ENCODE measurements at regions of chr10 and their contacts with region 1.

Region 1: DNA sequence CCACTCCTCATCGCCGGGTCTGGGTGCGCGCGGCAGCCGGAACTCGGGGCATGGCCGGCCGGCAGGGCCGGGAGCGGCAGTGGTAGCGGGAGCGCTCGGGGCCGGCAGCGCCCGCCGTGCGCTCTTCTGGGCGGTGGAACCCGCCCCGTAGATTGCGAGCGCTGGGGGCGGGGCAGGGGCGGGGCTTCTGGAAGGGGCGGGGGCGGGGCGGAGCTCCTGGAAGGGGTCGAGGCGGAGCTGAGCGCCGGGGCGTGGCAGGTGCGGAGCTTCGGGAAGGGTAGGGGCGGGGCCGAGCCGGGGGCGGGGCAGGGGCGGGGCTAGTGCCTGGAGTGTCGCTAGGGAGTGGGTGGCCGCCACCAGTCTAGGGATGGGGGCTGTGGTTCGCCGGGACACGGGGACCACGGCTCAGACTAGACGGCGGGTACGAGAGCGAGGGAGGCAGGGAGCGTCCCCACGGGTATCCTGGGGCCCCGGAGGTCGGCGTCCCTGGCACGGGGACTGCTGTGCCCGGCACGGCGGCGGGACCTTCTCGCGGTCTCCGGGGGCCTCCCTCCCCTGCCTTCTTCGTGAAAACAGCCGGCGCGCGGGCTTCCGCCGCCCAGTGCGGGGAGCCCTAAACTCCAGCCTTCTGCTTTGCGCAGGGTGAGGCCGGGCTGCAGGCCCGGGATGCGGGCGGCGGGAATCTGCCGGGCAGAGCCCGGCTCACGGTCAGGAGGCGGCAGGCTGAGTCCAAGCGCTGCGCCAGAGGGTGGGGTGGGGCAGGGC is at the start of gene STK32C:
- DNase-seq: peak; percentile 80
- H3K4me3 Mint-ChIP-seq: peak within 1 kb of the TSS; percentile 87
- H3K27ac Mint-ChIP-seq: peak within 1 kb of the TSS; percentile 89
- H3K4me1 Mint-ChIP-seq: no peaks in the 10 kb centered on the region
- H3K27me3 Mint-ChIP-seq: peaks cover 39% of the 10 kb centered on the region
- total RNA-seq, gene STK32C: 14.6 and 15.5 TPM in 2 replicates

Region 2: GRCh38 chr10:132158122-132158741 is 149.8 kb before region 1 on chr10:
- intact Hi-C with region 1: loop called (anchors 1 kb)
- DNase-seq: peak; percentile 40
- H3K4me3 Mint-ChIP-seq: no peak overlapping the region
- H3K27ac Mint-ChIP-seq: peak overlapping the region; percentile 83
- H3K4me1 Mint-ChIP-seq: peaks cover 28% of the 10 kb centered on the region
- H3K27me3 Mint-ChIP-seq: peaks cover 2% of the 10 kb centered on the region

Region 3: DNA sequence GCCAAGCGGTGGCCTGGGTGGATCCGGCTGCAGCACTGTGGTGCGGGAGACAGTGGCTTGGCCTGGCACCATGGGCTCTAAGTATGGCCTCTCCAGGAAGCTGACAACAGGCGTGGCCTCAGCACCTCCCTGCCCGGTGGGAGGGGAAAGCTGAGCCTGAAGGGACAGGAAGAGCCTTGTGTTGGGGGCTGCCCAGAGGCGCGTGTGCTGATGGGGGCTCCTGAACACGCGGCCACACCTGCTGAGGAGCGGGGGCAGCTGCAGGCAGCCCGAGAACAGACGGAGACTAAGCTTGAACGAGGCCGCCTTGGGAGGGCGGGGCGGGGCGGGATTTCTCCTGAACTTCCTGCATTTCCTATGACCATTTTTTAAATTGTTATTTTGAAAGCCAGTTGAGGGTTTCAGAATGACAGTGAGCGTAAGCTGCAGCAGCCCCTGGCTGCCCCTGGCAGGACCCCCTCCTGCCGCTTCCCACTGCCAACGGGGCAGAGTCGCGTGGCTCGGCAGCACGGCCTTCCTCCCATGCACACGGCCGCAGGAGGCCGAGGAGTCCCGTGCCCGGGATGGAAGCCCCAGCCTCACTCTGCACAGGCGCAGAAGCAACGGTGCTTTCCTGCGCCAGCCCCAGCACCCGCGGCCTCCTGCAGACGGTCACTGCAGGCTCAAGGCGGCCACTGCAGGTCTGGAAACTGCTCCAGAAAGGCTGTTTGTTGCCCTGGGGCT is 78.0 kb before region 1 on chr10:
- intact Hi-C with region 1: loop called (anchors 5 kb)
- DNase-seq: peak; percentile 47
- H3K4me3 Mint-ChIP-seq: peak overlapping the region; percentile 77
- H3K27ac Mint-ChIP-seq: peak overlapping the region; percentile 89
- H3K4me1 Mint-ChIP-seq: peaks cover 24% of the 10 kb centered on the region
- H3K27me3 Mint-ChIP-seq: no peaks in the 10 kb centered on the region

Region 4: DNA sequence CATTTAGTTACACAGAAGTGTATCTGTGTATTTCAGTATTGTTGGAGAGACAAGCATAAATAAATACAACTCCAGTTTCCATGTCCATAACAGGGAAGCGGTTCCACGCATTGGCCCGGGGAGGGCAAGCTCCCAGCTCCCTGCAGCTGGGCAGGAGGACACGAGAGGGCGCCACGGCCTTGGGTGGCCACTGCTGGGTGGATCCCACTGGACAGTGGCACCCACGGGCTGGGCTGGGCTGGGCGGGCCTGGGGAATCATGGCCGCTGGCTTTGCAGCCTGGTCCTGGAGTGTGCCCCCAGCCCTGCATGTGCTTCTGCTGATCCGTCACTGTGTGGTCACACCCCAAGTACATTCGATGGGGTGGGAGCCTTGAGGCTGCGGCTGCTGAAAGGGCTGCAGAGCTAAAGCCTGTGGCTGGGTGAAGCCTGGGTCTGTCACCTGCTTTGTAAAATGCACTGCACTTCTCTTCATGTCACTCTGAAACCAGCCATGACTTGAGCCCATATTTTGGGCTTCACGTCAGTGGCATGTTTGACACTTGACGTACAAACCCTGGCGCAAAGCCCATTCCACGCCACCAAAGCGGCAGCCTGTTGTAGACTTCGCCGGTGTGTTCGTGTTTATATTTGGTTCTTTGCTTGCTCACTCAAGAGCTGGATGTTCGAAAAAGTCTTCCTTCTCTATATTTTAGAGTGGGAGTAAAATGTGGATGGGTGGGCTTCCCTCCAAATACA is 51.5 kb after region 1 on chr10:
- intact Hi-C with region 1: no loop called
- DNase-seq: no peak
- H3K4me3 Mint-ChIP-seq: no peak overlapping the region
- H3K27ac Mint-ChIP-seq: no peak overlapping the region
- H3K4me1 Mint-ChIP-seq: peaks cover 3% of the 10 kb centered on the region
- H3K27me3 Mint-ChIP-seq: no peaks in the 10 kb centered on the region

Region 5: GRCh38 chr10:132446661-132447194 is 138.7 kb after region 1 on chr10:
- intact Hi-C with region 1: loop called (anchors 1 kb)
- DNase-seq: peak; percentile 63
- H3K4me3 Mint-ChIP-seq: peak overlapping the region; percentile 70
- H3K27ac Mint-ChIP-seq: peak overlapping the region; percentile 98
- H3K4me1 Mint-ChIP-seq: peaks cover 30% of the 10 kb centered on the region
- H3K27me3 Mint-ChIP-seq: peaks cover 1% of the 10 kb centered on the region

Region 6: GRCh38 chr10:133278577-133279265 is 970.7 kb after region 1 on chr10:
- intact Hi-C with region 1: loop called (anchors 10 kb)
- DNase-seq: peak; percentile 63
- H3K4me3 Mint-ChIP-seq: peak overlapping the region; percentile 87
- H3K27ac Mint-ChIP-seq: peak overlapping the region; percentile 86
- H3K4me1 Mint-ChIP-seq: peaks cover 14% of the 10 kb centered on the region
- H3K27me3 Mint-ChIP-seq: no peaks in the 10 kb centered on the region